ENCODE measurements at regions of chr17 and their contacts with region 1.

Region 1: DNA sequence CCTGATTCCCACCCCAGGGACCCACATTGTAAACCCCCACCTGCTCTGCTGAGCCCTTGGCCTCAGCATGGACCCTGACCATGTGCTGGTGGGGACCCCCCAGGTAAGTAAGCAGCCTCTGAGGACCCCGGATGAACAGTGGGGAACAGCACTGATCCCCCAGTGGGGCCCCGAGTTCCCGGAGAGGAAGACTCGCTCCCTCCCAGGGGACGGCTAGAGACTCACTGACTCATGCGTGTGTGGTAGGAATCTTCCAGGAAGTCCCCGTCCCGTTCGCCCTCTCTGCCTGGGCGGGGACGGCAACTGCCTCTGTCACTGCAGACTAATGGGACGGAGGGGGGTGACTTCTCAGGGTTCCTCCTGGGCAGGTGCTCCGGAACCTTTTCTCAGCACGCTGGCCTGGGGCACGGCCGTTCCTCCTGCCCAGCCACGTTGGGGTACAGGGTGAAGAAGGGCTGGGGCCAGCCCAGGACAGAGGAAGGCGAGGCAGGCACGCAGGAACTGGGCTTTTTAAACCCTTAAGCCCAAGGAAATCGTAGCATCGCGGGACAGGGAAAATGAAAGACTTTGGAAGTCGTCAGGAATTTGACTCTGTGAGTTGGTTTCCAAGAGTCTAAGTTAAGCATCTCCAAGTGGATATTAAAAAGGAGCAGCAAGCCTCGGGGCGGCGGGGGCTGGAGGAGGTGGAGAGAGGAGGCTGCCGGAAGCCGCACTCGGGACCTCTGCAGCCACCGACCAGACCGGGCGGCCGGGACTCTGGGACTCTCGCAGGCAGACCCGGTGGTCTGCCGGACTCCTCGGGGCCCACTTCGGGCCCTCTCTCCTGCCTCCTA is 178.7 kb downstream of the SEC14L1 start:
- DNase-seq: peak; percentile 86
- H3K4me3 ChIP-seq: peak overlapping the region; percentile 38 to 48 (median 41)
- H3K27ac ChIP-seq: peak overlapping the region; percentile 84
- H3K4me1 ChIP-seq: peaks cover 88% of the 10 kb centered on the region
- H3K27me3 ChIP-seq: no peaks in the 10 kb centered on the region
- CTCF ChIP-seq: no peak

Region 2: GRCh38 chr17:77254951-77255825 is 64.2 kb before region 1 on chr17:
- CTCF ChIA-PET with region 1: interaction called, 3 read pairs
- dilution Hi-C with region 1: no loop called
- in situ Hi-C with region 1: no loop called
- intact Hi-C with region 1: loop called (anchors 1 kb)
- DNase-seq: peak; percentile 98
- H3K4me3 ChIP-seq: peak overlapping the region in 2 of 3 experiments; percentile 7 to 25
- H3K27ac ChIP-seq: peak overlapping the region; percentile 92
- H3K4me1 ChIP-seq: peaks cover 36% of the 10 kb centered on the region
- H3K27me3 ChIP-seq: no peaks in the 10 kb centered on the region
- CTCF ChIP-seq: no peak

Region 3: DNA sequence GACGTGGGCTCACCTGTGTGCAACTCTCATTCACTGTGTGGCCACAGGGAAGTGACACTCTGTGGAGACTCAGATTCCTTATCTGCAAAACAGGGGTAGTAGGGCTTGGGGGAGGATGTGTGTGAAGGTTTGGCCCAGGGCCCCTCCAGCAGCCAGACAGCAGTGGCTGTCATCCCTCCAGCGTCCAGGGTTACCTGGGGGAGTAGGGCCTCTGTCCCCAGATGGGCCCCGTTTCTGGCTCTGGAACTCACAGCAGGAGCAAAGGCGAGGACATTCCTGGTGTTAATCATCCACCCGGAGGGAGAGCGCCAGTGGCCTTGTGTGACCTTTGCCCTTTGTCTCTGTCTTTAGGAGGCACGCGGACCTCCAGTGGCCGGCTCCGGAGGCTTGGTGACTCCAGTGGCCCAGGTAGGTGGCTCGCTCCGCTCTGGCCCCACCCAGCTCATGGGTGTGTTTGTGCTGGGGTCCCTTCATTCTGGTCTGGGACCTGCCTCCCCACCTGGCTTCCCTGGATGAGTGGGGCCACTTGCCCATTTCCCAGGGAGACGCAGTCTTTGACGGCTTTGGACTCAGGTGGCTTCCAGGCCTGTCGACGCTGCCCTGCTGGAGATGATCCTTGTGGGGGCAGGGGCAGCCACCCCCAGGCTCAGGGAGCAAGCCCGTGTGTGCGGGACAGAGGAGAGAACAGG is 12.5 kb before region 1 on chr17:
- CTCF ChIA-PET with region 1: no interaction called
- dilution Hi-C with region 1: no loop called
- in situ Hi-C with region 1: no loop called
- intact Hi-C with region 1: loop called (anchors 1 kb)
- DNase-seq: no peak
- H3K4me3 ChIP-seq: no peak overlapping the region
- H3K27ac ChIP-seq: no peak overlapping the region
- H3K4me1 ChIP-seq: peaks cover 62% of the 10 kb centered on the region
- H3K27me3 ChIP-seq: no peaks in the 10 kb centered on the region
- CTCF ChIP-seq: no peak

Region 4: GRCh38 chr17:77363821-77364361 is 44.5 kb after region 1 on chr17:
- CTCF ChIA-PET with region 1: no interaction called
- dilution Hi-C with region 1: no loop called
- in situ Hi-C with region 1: no loop called
- intact Hi-C with region 1: no loop called
- DNase-seq: no peak
- H3K4me3 ChIP-seq: no peak overlapping the region
- H3K27ac ChIP-seq: peak overlapping the region; percentile 26
- H3K4me1 ChIP-seq: peaks cover 54% of the 10 kb centered on the region
- H3K27me3 ChIP-seq: no peaks in the 10 kb centered on the region
- CTCF ChIP-seq: no peak

Region 5: GRCh38 chr17:77476931-77477877 is 157.8 kb after region 1 on chr17:
- CTCF ChIA-PET with region 1: no interaction called
- dilution Hi-C with region 1: no loop called
- in situ Hi-C with region 1: no loop called
- intact Hi-C with region 1: loop called (anchors 2 kb)
- DNase-seq: peak; percentile 98
- H3K4me3 ChIP-seq: no peak overlapping the region
- H3K27ac ChIP-seq: peak overlapping the region; percentile 87
- H3K4me1 ChIP-seq: peaks cover 82% of the 10 kb centered on the region
- H3K27me3 ChIP-seq: no peaks in the 10 kb centered on the region
- CTCF ChIP-seq: no peak

Region 6: GRCh38 chr17:77494664-77495435 is 175.4 kb after region 1 on chr17:
- CTCF ChIA-PET with region 1: no interaction called
- dilution Hi-C with region 1: no loop called
- in situ Hi-C with region 1: loop called in 1 of 2 experiments (anchors 10 kb)
- intact Hi-C with region 1: loop called (anchors 2 kb)
- DNase-seq: peak; percentile 46
- H3K4me3 ChIP-seq: no peak overlapping the region
- H3K27ac ChIP-seq: no peak overlapping the region
- H3K4me1 ChIP-seq: no peaks in the 10 kb centered on the region
- H3K27me3 ChIP-seq: no peaks in the 10 kb centered on the region
- CTCF ChIP-seq: peak; percentile 68 to 95

Region 7: GRCh38 chr17:77516902-77517301 is 197.5 kb after region 1 on chr17:
- CTCF ChIA-PET with region 1: no interaction called
- dilution Hi-C with region 1: no loop called
- in situ Hi-C with region 1: no loop called
- intact Hi-C with region 1: no loop called
- DNase-seq: peak; percentile 58
- H3K4me3 ChIP-seq: no peak overlapping the region
- H3K27ac ChIP-seq: no peak overlapping the region
- H3K4me1 ChIP-seq: no peaks in the 10 kb centered on the region
- H3K27me3 ChIP-seq: no peaks in the 10 kb centered on the region
- CTCF ChIP-seq: no peak

Measured in mammary epithelial cell (primary cell).